GM12878 (cell line): ENCODE measurements at regions of chr1 and their contacts with region 1.

Region 1: GRCh38 chr1:101474039-101474665 is 237.3 kb downstream of the S1PR1 start:
- DNase-seq: no peak
- ATAC-seq: peak; percentile 90
- H3K4me3 ChIP-seq: no peak overlapping the region
- H3K27ac ChIP-seq: no peak overlapping the region
- H3K4me1 ChIP-seq: no peaks in the 10 kb centered on the region
- H3K27me3 ChIP-seq: no peaks in the 10 kb centered on the region
- CTCF ChIP-seq: peak; percentile 38 to 54 (median 51)
- EP300 ChIP-seq: no peak
- POLR2A ChIP-seq: no peak
- RAD21 ChIP-seq: peak; percentile 27; the same call in 1 of the 2 replicates

Region 2: DNA sequence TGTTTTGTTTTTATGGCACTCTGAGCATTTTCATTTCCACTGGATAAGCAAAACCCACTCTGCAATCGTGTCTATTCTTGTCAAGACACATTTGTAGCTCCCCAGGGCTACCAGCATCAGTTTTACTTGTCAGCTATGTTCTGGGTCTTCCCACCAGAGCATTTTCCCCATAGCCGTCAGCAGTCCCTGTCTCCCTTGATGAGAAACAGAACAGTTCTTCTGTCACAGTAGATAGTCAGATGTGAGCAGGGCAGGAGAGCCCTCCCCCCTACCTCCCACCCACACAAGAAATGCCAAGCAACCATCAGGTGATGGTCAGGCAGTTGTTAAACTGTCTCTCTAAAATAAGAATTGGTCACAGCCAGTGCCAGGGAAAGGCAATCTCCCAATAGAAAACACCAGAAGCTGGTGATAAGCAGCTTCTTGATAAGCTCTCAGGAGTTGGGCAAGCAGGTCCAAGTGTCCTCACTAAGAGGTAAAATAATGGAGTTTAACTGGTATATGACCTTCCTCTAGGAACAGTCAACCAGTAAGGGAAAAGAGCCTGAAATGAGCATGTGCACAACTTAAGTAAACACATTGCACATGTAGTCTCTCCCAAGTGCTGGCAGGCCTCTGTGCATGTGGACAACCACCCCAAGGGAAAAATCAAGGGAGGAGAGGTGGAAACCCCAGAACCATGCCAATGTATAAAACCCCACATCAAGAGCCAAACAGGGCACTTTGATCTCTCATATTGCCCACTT is 29.1 kb before region 1 on chr1:
- CTCF ChIA-PET with region 1: interaction called, 19 read pairs
- POLR2A ChIA-PET with region 1: no interaction called
- RAD21 ChIA-PET with region 1: interaction called, 4 read pairs
- SMC1A ChIA-PET with region 1: interaction called, 10 read pairs
- in situ Hi-C with region 1: no loop called
- intact Hi-C with region 1: no loop called
- DNase-seq: no peak
- ATAC-seq: peak; percentile 33
- H3K4me3 ChIP-seq: no peak overlapping the region
- H3K27ac ChIP-seq: peak overlapping the region; percentile 62
- H3K4me1 ChIP-seq: peaks cover 20% of the 10 kb centered on the region
- H3K27me3 ChIP-seq: no peaks in the 10 kb centered on the region
- CTCF ChIP-seq: no peak
- EP300 ChIP-seq: no peak
- POLR2A ChIP-seq: no peak
- RAD21 ChIP-seq: no peak

Region 3: GRCh38 chr1:101451888-101452287 is 22.3 kb before region 1 on chr1:
- CTCF ChIA-PET with region 1: interaction called, 11 read pairs
- POLR2A ChIA-PET with region 1: no interaction called
- RAD21 ChIA-PET with region 1: no interaction called
- SMC1A ChIA-PET with region 1: interaction called, 3 read pairs
- in situ Hi-C with region 1: no loop called
- intact Hi-C with region 1: no loop called
- DNase-seq: no peak
- ATAC-seq: peak; percentile 78
- H3K4me3 ChIP-seq: no peak overlapping the region
- H3K27ac ChIP-seq: peak overlapping the region; percentile 77
- H3K4me1 ChIP-seq: peaks cover 44% of the 10 kb centered on the region
- H3K27me3 ChIP-seq: no peaks in the 10 kb centered on the region
- CTCF ChIP-seq: no peak
- EP300 ChIP-seq: no peak
- POLR2A ChIP-seq: no peak
- RAD21 ChIP-seq: no peak

Region 4: DNA sequence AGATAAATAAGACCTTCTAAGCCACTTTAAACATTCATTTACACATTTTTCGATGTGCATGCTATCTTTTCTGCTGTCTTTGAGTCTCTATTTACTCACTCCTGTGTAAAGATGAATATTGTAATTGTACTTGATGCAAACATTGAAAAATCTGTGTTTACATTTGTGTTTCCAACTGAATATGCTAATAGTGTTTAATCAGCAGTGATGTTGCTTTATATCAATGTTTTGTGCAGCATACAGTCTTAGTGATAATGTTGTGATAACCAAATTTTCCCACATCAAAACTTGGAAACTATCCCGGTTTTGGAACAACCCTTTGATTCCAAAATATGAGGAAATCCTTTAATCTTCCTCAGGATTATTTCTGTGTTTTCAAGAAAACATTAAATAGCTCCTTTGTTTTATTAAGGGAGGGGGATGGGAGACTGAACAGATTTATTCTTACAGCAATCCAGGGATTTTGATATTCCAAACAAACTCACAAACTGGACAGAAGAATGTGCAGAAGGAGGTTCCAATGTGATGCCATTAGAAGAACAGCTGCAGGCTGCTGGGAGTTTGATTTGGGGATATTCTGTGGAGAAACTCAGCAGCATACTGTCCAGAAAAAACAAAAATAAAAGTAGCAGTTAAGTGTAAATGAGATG is 10.7 kb after region 1 on chr1:
- CTCF ChIA-PET with region 1: interaction called, 43 read pairs
- POLR2A ChIA-PET with region 1: interaction called, 3 read pairs
- RAD21 ChIA-PET with region 1: no interaction called
- SMC1A ChIA-PET with region 1: interaction called, 7 read pairs
- in situ Hi-C with region 1: no loop called
- intact Hi-C with region 1: no loop called
- DNase-seq: no peak
- ATAC-seq: no peak
- H3K4me3 ChIP-seq: no peak overlapping the region
- H3K27ac ChIP-seq: no peak overlapping the region
- H3K4me1 ChIP-seq: no peaks in the 10 kb centered on the region
- H3K27me3 ChIP-seq: no peaks in the 10 kb centered on the region
- CTCF ChIP-seq: no peak
- EP300 ChIP-seq: no peak
- POLR2A ChIP-seq: no peak
- RAD21 ChIP-seq: no peak

Region 5: GRCh38 chr1:101506541-101507164 is 32.5 kb after region 1 on chr1:
- CTCF ChIA-PET with region 1: interaction called, 29 read pairs
- POLR2A ChIA-PET with region 1: no interaction called
- RAD21 ChIA-PET with region 1: no interaction called
- SMC1A ChIA-PET with region 1: interaction called, 8 read pairs
- in situ Hi-C with region 1: no loop called
- intact Hi-C with region 1: no loop called
- DNase-seq: peak; percentile 21
- ATAC-seq: peak; percentile 93
- H3K4me3 ChIP-seq: no peak overlapping the region
- H3K27ac ChIP-seq: no peak overlapping the region
- H3K4me1 ChIP-seq: no peaks in the 10 kb centered on the region
- H3K27me3 ChIP-seq: no peaks in the 10 kb centered on the region
- CTCF ChIP-seq: peak; percentile 61 to 77 (median 68)
- EP300 ChIP-seq: no peak
- POLR2A ChIP-seq: no peak
- RAD21 ChIP-seq: peak; percentile 53; the same call in 1 of the 2 replicates